ENCODE measurements at regions of chr10 and their contacts with region 1.

Region 1: DNA sequence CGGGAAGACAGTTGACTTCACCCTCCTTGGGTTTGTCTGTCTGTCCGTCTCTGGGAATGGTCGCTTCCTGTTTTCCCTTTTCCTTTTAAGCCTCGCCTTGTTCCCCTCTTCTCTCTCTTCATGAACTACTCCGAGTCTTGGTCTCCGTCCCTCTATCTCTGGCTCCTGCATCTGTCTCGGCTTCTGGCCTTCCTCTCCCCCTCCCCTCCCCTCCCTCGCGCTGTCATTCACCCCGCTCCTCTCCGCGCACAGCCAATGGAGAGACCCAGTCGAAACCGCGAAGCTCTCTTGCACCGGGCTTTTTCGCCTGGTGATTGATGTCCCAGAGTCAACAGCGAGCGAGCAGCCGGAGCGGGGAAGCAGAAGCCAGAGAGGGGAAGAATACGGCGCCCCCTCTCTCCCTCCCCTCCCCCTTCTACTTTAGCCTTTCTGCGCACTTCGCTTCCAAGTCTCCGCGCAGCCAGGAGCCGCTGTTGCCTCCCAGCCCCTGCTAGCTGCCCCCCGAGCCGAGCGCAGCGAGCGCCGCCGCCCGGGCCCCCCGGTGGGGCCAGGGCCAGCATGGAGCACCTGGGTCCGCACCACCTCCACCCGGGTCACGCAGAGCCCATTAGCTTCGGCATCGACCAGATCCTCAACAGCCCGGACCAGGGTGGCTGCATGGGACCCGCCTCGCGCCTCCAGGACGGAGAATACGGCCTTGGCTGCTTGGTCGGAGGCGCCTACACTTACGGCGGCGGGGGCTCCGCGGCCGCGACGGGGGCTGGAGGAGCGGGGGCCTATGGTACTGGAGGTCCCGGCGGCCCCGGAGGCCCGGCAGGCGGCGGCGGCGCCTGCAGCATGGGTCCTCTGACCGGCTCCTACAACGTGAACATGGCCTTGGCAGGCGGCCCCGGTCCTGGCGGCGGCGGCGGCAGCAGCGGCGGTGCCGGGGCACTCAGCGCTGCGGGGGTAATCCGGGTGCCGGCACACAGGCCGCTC is at the start of gene TLX1:
- DNase-seq: peak; percentile 41
- ATAC-seq: no peak
- H3K4me3 Mint-ChIP-seq: peak within 1 kb of the TSS; percentile 21
- H3K27ac Mint-ChIP-seq: no peak within 1 kb of the TSS
- H3K4me1 Mint-ChIP-seq: peaks cover 24% of the 10 kb centered on the region
- H3K27me3 Mint-ChIP-seq: peaks cover 76% of the 10 kb centered on the region
- total RNA-seq, gene TLX1: not detected

Region 2: DNA sequence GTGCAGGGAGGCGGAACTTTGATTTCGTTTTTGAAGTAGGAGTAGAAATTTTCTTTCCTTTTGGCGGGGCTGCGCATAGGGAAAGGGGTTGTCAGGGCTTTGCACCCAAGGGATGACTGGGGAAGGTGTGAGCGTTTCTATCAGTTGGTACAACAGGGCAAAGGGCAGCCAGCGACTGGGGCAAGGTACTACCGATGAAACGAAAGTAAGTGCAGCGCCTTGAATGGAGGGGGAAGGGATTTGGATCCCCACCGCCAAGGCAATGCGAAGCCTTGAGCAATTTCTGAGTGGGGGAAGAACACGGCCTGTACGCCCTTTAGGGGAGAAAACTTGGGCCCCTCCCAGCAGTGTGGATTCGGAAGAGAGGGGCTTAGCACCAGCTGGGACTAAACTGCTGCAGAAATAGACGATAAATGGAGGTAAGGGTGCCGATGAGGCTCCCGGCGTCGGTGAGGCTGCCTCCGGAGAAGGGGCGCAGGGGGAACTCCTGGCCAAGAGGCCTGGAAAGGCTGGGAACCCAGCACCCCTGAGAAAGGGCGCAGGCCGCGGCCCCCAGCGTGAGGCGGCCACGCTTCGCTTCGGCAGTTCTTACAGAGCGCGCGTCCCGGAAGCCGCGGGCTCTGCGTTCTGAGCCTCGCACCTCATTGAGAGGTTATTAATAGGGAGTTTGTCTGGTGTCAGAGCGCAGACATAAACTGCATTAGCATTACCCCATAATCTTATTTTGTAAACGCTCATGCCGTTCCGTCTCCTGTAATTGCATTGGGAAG is 10.2 kb before region 1 on chr10:
- CTCF ChIA-PET with region 1: interaction called, 3 read pairs
- POLR2A ChIA-PET with region 1: no interaction called
- intact Hi-C with region 1: loop called in 1 of 2 experiments (anchors 2 kb)
- DNase-seq: peak; percentile 66
- ATAC-seq: peak; percentile 81
- H3K4me3 Mint-ChIP-seq: peak overlapping the region; percentile 79
- H3K27ac Mint-ChIP-seq: peak overlapping the region; percentile 90
- H3K4me1 Mint-ChIP-seq: peaks cover 26% of the 10 kb centered on the region
- H3K27me3 Mint-ChIP-seq: peaks cover 45% of the 10 kb centered on the region

Measured in activated CD4-positive, alpha-beta T cell treated with anti-CD3 and anti-CD28 coated beads for 36 hours (primary cell).